Heart right ventricle (tissue), 16 donors: ENCODE measurements at regions of chr9 and their contacts with region 1.

Region 1: DNA sequence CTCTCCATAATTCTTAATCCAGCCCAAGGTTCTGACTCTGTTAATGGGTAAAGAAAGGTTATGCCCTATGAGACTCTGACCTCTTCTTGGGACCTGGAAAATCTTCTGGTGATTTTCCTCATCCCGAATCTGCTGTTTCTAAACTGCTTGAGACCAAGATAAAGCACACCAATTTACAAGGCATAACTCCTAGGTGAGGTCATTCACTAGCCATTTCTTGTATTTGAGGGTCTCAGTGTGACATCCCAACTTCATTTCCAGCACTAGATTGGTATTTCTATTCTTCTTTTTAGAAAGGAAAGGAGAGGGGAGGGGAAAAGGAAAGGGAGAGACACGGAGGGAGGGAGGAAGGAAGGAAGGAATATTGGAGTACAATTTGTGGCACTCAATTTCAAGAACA is 51.6 kb downstream of the SLC1A1 start:
- DNase-seq: no peak
- ATAC-seq: no peak
- H3K4me3 ChIP-seq: no peak overlapping the region
- H3K27ac ChIP-seq: no peak overlapping the region
- H3K4me1 ChIP-seq: peaks cover 0 to 6% (median 4%) of the 10 kb centered on the region in 9 donors
- H3K27me3 ChIP-seq: no peaks in the 10 kb centered on the region
- CTCF ChIP-seq: no peak

Region 2: DNA sequence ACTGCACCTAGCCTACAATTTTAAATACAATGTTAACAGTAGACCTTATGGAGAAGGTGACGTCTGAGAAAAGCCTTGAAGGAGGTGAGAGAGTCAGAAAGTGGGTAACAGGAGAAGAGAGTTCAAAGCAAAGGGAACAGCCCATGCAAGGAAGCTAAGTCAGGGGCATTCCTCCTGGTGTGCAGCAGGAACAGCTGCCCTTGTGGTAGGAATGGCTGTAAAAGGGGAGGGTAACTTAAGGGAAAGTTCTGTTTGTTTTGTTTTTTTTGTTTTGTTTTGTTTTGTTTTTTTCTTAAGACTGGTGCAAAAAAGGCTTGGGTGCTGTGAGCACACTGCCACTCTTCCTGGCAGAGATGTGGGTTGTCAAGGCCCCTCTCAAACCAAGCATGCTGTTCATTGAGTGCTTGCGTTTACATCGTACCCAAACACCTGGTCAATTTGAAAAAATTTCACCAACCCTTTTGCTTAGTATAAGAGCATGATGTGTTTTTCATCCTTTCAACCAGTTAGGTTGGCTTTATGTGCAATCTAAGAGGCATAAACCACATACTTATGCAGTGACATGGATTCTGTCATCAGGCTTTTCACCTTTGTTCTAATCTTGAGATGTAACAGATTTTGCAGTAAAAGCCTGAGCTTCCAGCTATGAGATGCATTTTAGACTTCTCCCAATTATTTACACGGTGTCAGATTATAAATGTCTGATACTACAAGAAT is 521.7 kb before region 1 on chr9:
- intact Hi-C with region 1: no loop called
- DNase-seq: no peak
- ATAC-seq: no peak
- H3K4me3 ChIP-seq: no peak overlapping the region
- H3K27ac ChIP-seq: no peak overlapping the region
- H3K4me1 ChIP-seq: peaks cover 0 to 8% (median 0%) of the 10 kb centered on the region in 9 donors
- H3K27me3 ChIP-seq: no peaks in the 10 kb centered on the region
- CTCF ChIP-seq: no peak

Region 3: DNA sequence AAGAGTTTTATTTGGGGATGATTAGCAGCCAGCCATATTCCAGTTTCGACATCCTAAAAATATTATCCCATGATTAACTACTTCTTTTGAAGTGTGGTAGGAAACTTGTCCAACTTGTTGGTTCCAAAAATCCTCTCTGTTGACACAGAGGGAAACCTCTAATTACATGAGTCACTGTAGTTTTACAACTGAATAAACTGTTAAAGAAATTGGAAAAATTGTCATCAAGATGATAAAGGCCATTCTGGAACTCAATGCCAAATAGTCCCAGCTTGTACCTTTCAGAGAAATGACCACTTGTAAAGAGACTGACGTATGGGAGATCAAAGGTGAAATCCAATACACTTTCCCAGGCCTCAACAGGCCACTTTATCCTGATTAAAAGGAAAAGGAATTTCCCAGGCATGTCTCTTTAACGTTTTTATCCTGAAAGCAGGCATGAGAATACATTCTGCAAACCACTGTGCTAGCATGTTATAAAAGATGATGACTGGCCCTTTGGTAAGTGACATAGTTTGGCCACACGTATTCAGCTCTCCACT is 503.6 kb before region 1 on chr9:
- intact Hi-C with region 1: no loop called
- DNase-seq: no peak
- ATAC-seq: peak in 6 of 8 donors; percentile 10 to 67 (median 50)
- H3K4me3 ChIP-seq: no peak overlapping the region
- H3K27ac ChIP-seq: peak overlapping the region in 3 of 10 donors; percentile 29 to 54 (median 48)
- H3K4me1 ChIP-seq: peaks cover 0 to 5% (median 0%) of the 10 kb centered on the region in 9 donors
- H3K27me3 ChIP-seq: no peaks in the 10 kb centered on the region
- CTCF ChIP-seq: no peak

Region 4: GRCh38 chr9:4422495-4422894 is 119.4 kb before region 1 on chr9:
- intact Hi-C with region 1: loop called in 1 of 10 experiments (anchors 5 kb)
- DNase-seq: no peak
- ATAC-seq: no peak
- H3K4me3 ChIP-seq: no peak overlapping the region
- H3K27ac ChIP-seq: no peak overlapping the region
- H3K4me1 ChIP-seq: peaks cover 0 to 14% (median 0%) of the 10 kb centered on the region in 9 donors
- H3K27me3 ChIP-seq: no peaks in the 10 kb centered on the region
- CTCF ChIP-seq: no peak